PC-9 (cell line): ENCODE measurements at regions of chr3 and their contacts with region 1.

Region 1: GRCh38 chr3:45210308-45211041 is 15.6 kb downstream of the TMEM158 start:
- DNase-seq: peak; percentile 66 to 79
- H3K4me3 ChIP-seq: no peak overlapping the region
- H3K27ac ChIP-seq: no peak overlapping the region
- H3K4me1 ChIP-seq: peaks cover 26% of the 10 kb centered on the region
- H3K27me3 ChIP-seq: no peaks in the 10 kb centered on the region
- CTCF ChIP-seq: peak; percentile 88

Region 2: GRCh38 chr3:44411031-44411645 is 799.3 kb before region 1 on chr3:
- CTCF ChIA-PET with region 1: no interaction called
- POLR2A ChIA-PET with region 1: no interaction called
- intact Hi-C with region 1: no loop called
- DNase-seq: no peak
- H3K4me3 ChIP-seq: no peak overlapping the region
- H3K27ac ChIP-seq: no peak overlapping the region
- H3K4me1 ChIP-seq: no peaks in the 10 kb centered on the region
- H3K27me3 ChIP-seq: no peaks in the 10 kb centered on the region
- CTCF ChIP-seq: no peak

Region 3: DNA sequence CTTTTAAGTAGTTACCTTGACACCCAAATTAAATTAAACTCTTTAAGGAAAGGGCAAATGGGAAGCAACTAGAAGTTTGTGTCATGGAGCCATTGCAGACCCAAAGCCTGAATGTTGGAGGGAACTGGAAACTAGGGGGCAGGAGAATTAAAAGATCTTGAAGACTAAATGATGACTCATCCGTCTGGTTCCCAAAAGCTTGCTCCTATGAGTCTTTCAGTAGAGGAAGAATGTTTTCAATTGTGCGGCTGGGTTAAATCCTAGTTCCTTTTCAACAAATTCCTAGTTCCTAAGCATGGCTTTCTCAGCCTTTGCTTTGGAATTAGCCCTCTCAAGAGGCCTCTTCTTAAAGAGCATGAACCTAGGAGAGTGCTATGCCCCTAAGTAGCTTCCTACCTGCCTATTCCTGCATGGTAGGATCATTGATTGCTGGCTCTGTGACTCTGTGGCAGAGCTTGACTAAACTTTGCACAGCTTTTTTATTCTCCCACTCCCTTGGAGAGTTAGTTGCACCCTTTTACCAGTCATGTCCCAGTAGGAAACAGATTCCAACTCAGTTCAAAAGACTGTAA is 166.7 kb before region 1 on chr3:
- CTCF ChIA-PET with region 1: interaction called, 17 read pairs
- POLR2A ChIA-PET with region 1: no interaction called
- intact Hi-C with region 1: loop called (anchors 1 kb)
- DNase-seq: peak in 1 of 2 experiments; percentile 58
- H3K4me3 ChIP-seq: no peak overlapping the region
- H3K27ac ChIP-seq: peak overlapping the region; percentile 58; the same call in 1 of the 2 replicates
- H3K4me1 ChIP-seq: peaks cover 33% of the 10 kb centered on the region
- H3K27me3 ChIP-seq: no peaks in the 10 kb centered on the region
- CTCF ChIP-seq: no peak

Region 4: DNA sequence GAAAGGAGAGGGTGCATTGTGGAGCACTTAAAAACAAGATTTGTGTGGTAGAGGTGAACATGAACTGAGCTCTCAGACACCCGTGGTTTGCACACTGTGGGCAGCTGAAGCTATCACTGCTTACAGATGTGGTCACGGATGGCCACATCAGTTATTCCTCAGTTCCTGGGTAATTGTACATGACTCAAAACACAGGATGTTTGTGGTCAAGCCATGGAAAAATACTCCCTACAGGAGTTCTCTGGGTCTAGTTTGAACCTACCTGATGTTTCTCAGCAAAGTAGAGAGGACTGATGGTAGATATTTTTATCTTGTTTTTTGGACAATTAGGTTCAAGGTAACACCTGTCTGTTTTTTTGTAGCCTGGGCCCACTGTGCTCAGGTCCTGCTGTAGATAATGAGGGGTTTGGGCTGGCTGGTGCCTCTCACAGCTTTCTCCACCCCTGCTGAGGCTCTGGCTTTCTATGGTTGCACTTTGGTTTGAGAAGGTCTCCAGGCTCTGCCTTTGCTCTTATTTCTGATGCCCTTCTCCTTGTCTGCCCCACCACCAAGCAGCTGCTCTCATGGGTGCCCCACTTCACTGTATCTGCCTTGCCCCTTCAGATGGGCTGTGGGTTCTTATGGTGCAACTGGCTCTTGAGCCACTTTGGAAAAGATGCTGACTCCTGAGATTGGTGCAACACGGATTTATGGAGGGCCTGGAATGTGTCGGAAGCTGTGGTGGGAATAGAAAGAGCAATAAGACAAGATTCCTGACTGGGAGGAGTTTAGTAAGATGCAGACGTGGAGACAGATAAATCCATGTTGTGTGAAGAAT is 104.4 kb before region 1 on chr3:
- CTCF ChIA-PET with region 1: interaction called, 11 read pairs
- POLR2A ChIA-PET with region 1: interaction called, 3 read pairs
- intact Hi-C with region 1: no loop called
- DNase-seq: no peak
- H3K4me3 ChIP-seq: no peak overlapping the region
- H3K27ac ChIP-seq: no peak overlapping the region; the same call in 1 of the 2 replicates
- H3K4me1 ChIP-seq: no peaks in the 10 kb centered on the region
- H3K27me3 ChIP-seq: no peaks in the 10 kb centered on the region
- CTCF ChIP-seq: no peak

Region 5: GRCh38 chr3:45283471-45283870 is 73.0 kb after region 1 on chr3:
- CTCF ChIA-PET with region 1: no interaction called
- POLR2A ChIA-PET with region 1: no interaction called
- intact Hi-C with region 1: no loop called
- DNase-seq: no peak
- H3K4me3 ChIP-seq: no peak overlapping the region
- H3K27ac ChIP-seq: no peak overlapping the region
- H3K4me1 ChIP-seq: no peaks in the 10 kb centered on the region
- H3K27me3 ChIP-seq: no peaks in the 10 kb centered on the region
- CTCF ChIP-seq: no peak